ENCODE measurements at regions of chr22 and their contacts with region 1.

Region 1: DNA sequence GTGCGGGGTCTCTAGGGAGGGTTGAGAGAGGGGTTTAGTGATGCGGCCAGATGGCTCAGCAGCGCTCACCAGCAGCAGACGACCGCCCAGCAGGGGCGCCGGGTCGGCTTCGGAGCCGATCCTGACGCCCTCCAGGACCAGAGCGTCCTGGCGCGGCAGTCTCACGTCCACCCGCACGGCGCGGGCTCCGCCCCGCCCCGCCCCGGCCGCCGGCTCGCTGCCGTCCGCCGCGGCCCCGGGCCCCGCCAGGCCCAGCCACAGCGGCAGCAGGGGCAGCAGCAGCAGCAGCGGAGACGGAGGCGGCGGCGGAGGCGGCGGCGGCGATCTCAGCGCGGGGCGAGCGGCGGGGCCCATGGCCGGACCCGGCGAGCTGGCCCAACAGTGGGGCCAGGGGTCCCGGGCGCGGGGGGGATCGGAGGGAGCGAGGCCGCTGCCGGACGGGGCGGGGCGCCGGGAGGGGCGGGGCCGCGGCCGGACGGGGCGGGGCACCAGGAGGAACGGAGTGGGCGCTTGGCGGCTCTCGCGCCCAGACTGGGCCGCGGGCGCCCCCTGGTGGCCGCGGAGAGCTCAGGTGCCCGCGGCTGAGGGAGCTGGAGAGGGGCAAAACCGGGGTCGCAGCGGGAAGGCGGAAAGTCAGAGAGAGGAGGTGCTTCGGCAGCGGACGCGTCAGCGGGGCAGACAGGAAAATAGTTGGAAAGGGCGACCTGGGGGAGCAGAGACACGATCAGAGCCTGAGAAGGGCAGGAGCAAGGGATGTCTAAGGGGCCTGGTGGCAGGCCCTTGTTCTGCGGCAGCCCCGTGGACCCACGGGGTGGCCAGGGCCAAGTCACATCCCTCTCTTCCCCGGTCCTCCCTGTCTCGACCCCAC is at the start of gene RNF215:
- DNase-seq: peak; percentile 65 to 82
- ATAC-seq: peak; percentile 89
- total RNA-seq, gene RNF215: 8.7 to 9.5 TPM

Region 2: GRCh38 chr22:30262917-30263741 is 124.1 kb before region 1 on chr22:
- intact Hi-C with region 1: loop called (anchors 5 kb)
- DNase-seq: peak; percentile 59 to 85
- ATAC-seq: peak; percentile 29

Region 3: GRCh38 chr22:30485362-30485988 is 98.3 kb after region 1 on chr22:
- intact Hi-C with region 1: loop called in 1 of 2 experiments (anchors 10 kb)
- DNase-seq: peak; percentile 36 to 71
- ATAC-seq: peak; percentile 97